ENCODE measurements at regions of chr6 and their contacts with region 1.

Region 1: DNA sequence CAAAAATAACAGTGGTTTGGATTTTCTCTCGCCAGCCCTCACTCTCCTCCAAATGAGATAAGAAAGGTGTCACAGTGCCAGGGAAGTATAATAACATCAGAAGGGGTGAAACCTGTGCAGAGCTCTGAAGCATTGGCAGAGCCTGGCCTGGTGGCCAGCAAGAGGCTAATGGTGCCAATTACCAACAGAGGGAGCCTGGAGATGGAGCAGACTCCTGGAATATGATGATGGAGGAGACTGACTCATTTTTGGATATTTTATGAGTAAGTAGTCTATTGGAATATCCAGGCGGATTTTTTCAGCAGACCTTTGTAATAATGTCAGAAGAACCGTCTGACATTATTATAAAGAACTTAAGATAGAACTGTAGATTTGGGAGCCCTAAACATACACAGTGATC is 442.6 kb upstream of the MARCKS start:
- DNase-seq: peak; percentile 81
- ATAC-seq: peak; percentile 93
- H3K4me3 ChIP-seq: no peak overlapping the region
- H3K27ac ChIP-seq: no peak overlapping the region
- H3K4me1 ChIP-seq: peaks cover 4% of the 10 kb centered on the region; the same call in 1 of the 2 replicates
- H3K27me3 ChIP-seq: no peaks in the 10 kb centered on the region
- CTCF ChIP-seq: peak; percentile 68
- POLR2A ChIP-seq: no peak
- RAD21 ChIP-seq: peak; percentile 83

Region 2: GRCh38 chr6:113073611-113074191 is 340.8 kb before region 1 on chr6:
- CTCF ChIA-PET with region 1: no interaction called
- POLR2A ChIA-PET with region 1: no interaction called
- dilution Hi-C with region 1: no loop called
- in situ Hi-C with region 1: no loop called
- intact Hi-C with region 1: no loop called
- DNase-seq: peak; percentile 74
- ATAC-seq: peak; percentile 77
- H3K4me3 ChIP-seq: no peak overlapping the region
- H3K27ac ChIP-seq: no peak overlapping the region
- H3K4me1 ChIP-seq: peaks cover 2% of the 10 kb centered on the region; the same call in 1 of the 2 replicates
- H3K27me3 ChIP-seq: no peaks in the 10 kb centered on the region
- CTCF ChIP-seq: no peak
- POLR2A ChIP-seq: no peak
- RAD21 ChIP-seq: no peak

Region 3: DNA sequence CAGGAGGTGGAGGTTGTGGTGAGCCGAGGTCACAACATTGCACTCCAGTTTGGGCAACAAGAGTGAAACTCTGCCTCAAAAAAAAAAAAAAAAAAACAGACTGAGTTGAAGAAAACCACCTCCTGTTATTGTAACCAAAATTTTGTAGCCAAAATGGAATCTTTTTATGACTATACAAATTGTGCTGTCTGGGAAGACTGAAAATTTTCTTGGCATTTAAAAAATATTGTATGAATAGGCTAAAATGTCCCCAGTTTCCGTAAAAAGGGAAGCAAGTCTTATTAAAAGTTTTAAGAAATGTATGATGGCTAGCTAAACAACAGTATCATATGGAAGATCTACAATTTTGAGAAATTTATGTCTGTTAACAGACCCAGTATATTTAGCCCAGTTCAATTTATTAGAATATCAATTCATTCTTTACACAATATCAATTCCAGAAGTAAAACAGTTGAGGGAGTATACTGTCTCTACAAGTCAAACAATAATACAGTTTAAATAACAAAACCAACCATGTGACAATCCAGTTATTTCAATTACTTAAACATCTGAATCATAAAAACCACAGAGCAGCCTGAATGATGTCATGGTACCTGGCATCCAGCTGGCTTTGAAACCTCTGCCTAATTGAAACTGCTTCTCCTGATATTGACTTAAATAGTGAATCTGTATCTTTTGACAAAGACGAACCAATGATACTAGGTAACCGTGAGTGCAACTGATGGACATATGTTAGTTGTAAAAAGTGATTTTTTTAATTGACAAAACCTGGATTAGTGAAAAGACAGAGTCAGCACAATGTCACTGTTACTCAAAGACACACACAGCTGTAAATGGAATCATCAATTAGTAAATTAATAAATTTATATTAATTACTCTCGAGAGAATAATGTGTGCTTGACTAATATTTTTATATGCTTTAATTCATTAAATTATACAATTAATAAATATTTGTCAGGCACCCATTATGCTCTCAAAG is 276.1 kb after region 1 on chr6:
- CTCF ChIA-PET with region 1: no interaction called
- POLR2A ChIA-PET with region 1: no interaction called
- dilution Hi-C with region 1: no loop called
- in situ Hi-C with region 1: no loop called
- intact Hi-C with region 1: loop called (anchors 1 kb)
- DNase-seq: peak; percentile 94
- ATAC-seq: peak; percentile 85
- H3K4me3 ChIP-seq: no peak overlapping the region
- H3K27ac ChIP-seq: no peak overlapping the region
- H3K4me1 ChIP-seq: peaks cover 5% of the 10 kb centered on the region
- H3K27me3 ChIP-seq: peaks cover 14% of the 10 kb centered on the region; the same call in 1 of the 2 replicates
- CTCF ChIP-seq: no peak
- POLR2A ChIP-seq: no peak
- RAD21 ChIP-seq: no peak

Measured in IMR-90 (cell line).